GM12878 (cell line): ENCODE measurements at regions of chr10 and their contacts with region 1.

Region 1: GRCh38 chr10:18659120-18659818 is at the start of gene ARL5B:
- DNase-seq: peak; percentile 92
- ATAC-seq: peak; percentile 91
- H3K4me3 ChIP-seq: peak within 1 kb of the TSS; percentile 92
- H3K27ac ChIP-seq: peak within 1 kb of the TSS; percentile 100
- H3K4me1 ChIP-seq: peaks cover 3% of the 10 kb centered on the region; the same call in 1 of the 2 replicates
- H3K27me3 ChIP-seq: no peaks in the 10 kb centered on the region
- CTCF ChIP-seq: no peak
- EP300 ChIP-seq: peak; percentile 89 to 95
- POLR2A ChIP-seq: peak; percentile 90
- RAD21 ChIP-seq: no peak
- polyA plus RNA-seq, gene ARL5B: 2.5 to 2.6 TPM

Region 2: DNA sequence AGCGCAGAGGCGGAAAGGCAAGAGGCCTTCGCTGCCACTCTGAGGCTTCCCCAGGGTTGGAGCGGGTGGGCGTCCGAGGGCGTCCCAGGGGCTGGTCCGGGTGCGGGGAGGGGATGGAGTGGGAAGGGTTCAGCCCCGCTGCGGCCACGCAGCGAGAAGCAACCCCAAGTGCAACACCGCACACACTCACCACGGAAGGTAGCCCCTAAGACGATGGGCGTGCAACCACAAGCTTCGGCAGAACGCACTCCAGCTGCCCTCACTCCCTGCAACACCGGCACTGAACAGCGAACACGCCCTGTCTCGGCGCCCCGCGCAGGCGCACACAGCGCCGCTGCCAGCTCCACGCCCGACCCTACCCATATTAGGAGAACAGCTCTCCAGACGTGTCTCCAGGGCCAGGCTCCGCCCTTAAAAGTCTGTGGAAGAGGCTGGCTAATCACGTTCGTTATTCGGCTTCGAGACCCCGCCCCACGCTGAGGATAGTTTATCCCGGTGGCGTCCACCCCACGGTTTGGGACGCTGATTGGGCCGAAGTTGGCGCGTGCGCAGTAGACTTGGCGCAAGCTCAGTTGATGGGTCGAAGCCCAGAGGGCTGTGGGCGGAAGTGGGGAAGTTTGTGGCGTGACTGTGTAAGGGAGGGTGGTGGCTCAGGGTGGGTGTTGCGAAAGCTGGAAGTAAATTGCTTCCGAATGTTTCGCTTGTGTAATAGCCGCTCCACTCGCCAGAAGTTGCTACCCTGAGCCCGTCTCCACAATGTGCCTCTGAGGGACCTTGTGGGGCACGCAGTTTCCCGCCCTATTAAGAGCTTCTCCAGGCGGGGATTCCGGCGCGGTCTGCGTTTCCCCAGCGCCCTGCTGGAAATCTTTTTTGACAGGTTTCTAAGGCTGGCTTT is 1841.9 kb before region 1 on chr10 and contains the start of gene RSU1:
- CTCF ChIA-PET with region 1: no interaction called
- POLR2A ChIA-PET with region 1: no interaction called
- RAD21 ChIA-PET with region 1: no interaction called
- SMC1A ChIA-PET with region 1: no interaction called
- in situ Hi-C with region 1: loop called (anchors 25 kb)
- intact Hi-C with region 1: no loop called
- DNase-seq: peak; percentile 98
- ATAC-seq: peak; percentile 97
- H3K4me3 ChIP-seq: peak within 1 kb of the TSS; percentile 85
- H3K27ac ChIP-seq: peak within 1 kb of the TSS; percentile 78
- H3K4me1 ChIP-seq: no peaks in the 10 kb centered on the region
- H3K27me3 ChIP-seq: no peaks in the 10 kb centered on the region; a peak in 1 of 4 replicates
- CTCF ChIP-seq: no peak
- EP300 ChIP-seq: no peak
- POLR2A ChIP-seq: peak; percentile 89
- RAD21 ChIP-seq: no peak
- polyA plus RNA-seq, gene RSU1: 80.7 to 139 TPM

Region 3: DNA sequence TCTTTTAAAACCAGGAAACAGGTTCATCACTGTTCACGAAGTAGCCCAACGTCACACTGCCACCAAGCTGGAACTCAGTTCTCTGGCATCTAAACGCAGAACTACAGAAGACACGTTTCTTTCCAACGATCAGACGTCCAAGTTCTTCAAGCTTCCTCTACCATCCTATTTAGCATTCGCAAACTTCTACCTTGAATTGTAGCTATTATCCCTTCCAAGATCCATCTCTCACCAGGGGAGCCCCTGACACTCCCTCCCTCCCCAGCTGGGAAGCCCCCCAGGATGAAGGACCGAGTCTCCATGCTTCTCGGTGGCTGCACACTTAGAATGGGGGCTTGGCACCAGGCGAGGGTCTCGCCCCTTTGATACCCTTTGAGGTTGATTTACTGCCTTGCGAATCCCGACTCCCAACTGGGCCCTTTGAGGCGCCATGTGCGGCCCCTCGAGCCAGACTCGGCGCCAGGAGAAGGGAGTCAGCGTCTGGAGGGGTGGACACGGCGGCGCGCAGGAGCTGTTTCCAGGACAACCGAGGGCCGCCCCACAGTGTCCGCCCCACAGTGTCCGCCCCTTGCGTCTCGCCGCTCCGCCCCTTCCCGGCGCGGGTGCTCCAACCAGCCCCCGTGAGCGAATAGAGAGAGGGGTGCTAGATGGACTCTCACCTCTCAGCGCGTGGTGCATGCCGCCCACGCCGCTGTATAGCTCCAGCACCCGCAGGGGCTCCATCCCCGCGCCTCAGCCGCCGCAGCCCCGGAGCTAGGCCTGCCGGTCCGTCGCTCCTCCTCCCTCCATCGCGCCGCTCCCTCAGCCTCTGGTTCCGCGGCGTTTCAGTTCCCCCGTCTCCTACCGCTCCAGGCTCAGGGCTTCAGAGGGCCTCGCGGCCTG is 1458.1 kb before region 1 on chr10 and contains the start of gene TRDMT1:
- CTCF ChIA-PET with region 1: no interaction called
- POLR2A ChIA-PET with region 1: no interaction called
- RAD21 ChIA-PET with region 1: no interaction called
- SMC1A ChIA-PET with region 1: no interaction called
- in situ Hi-C with region 1: loop called (anchors 25 kb)
- intact Hi-C with region 1: no loop called
- DNase-seq: no peak
- ATAC-seq: peak; percentile 99
- H3K4me3 ChIP-seq: peak within 1 kb of the TSS; percentile 89
- H3K27ac ChIP-seq: peak within 1 kb of the TSS; percentile 58; the same call in 1 of the 2 replicates
- H3K4me1 ChIP-seq: peaks cover under 1% of the 10 kb centered on the region
- H3K27me3 ChIP-seq: no peaks in the 10 kb centered on the region
- CTCF ChIP-seq: no peak
- EP300 ChIP-seq: no peak
- POLR2A ChIP-seq: peak; percentile 87
- RAD21 ChIP-seq: peak; percentile 22; the same call in 1 of the 2 replicates
- polyA plus RNA-seq, gene TRDMT1: 2.3 to 5.2 TPM

Region 4: DNA sequence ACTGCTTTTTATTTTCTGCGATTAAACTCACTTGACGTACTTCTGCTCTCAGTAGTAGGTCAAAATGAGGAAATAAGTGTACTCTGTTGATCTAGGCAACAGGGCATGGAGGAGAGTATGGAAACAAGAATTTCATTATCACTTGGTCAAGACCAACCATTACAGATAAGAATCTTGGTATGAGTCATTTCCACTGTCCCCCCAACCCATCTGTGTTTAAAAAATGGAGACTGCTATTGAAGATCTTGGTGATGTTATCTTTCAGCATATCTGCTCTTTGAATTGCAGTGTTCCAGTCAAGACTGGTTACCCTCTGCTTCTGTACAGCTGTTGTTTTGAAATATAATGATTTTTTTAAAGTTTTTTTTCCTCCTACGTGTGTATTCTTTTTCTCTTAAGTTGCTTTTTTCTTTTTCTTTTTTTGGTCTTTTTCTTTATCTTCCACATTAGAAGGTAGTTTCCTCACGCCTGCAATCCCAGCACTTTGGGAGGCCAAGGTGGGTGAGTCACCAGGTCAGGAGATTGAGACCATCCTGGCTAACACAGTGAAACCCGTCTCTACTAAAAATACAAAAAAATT is 1003.6 kb before region 1 on chr10:
- CTCF ChIA-PET with region 1: no interaction called
- POLR2A ChIA-PET with region 1: no interaction called
- RAD21 ChIA-PET with region 1: no interaction called
- SMC1A ChIA-PET with region 1: no interaction called
- in situ Hi-C with region 1: loop called (anchors 10 kb)
- intact Hi-C with region 1: no loop called
- DNase-seq: peak; percentile 64
- ATAC-seq: peak; percentile 92
- H3K4me3 ChIP-seq: no peak overlapping the region; the same call in 1 of the 2 replicates
- H3K27ac ChIP-seq: peak overlapping the region; percentile 49
- H3K4me1 ChIP-seq: peaks cover 11% of the 10 kb centered on the region; the same call in 1 of the 2 replicates
- H3K27me3 ChIP-seq: no peaks in the 10 kb centered on the region
- CTCF ChIP-seq: no peak
- EP300 ChIP-seq: peak; percentile 59 to 76; a peak in 2 of 4 replicates
- POLR2A ChIP-seq: no peak
- RAD21 ChIP-seq: no peak

Region 5: GRCh38 chr10:17685233-17685840 is 973.9 kb before region 1 on chr10:
- CTCF ChIA-PET with region 1: no interaction called
- POLR2A ChIA-PET with region 1: no interaction called
- RAD21 ChIA-PET with region 1: no interaction called
- SMC1A ChIA-PET with region 1: no interaction called
- in situ Hi-C with region 1: no loop called
- intact Hi-C with region 1: loop called (anchors 10 kb)
- DNase-seq: peak; percentile 28
- ATAC-seq: peak; percentile 89
- H3K4me3 ChIP-seq: no peak overlapping the region
- H3K27ac ChIP-seq: peak overlapping the region; percentile 83
- H3K4me1 ChIP-seq: peaks cover 12% of the 10 kb centered on the region
- H3K27me3 ChIP-seq: no peaks in the 10 kb centered on the region
- CTCF ChIP-seq: no peak
- EP300 ChIP-seq: peak in 1 of 2 experiments; percentile 50; a peak in 1 of 4 replicates
- POLR2A ChIP-seq: no peak
- RAD21 ChIP-seq: no peak

Region 6: DNA sequence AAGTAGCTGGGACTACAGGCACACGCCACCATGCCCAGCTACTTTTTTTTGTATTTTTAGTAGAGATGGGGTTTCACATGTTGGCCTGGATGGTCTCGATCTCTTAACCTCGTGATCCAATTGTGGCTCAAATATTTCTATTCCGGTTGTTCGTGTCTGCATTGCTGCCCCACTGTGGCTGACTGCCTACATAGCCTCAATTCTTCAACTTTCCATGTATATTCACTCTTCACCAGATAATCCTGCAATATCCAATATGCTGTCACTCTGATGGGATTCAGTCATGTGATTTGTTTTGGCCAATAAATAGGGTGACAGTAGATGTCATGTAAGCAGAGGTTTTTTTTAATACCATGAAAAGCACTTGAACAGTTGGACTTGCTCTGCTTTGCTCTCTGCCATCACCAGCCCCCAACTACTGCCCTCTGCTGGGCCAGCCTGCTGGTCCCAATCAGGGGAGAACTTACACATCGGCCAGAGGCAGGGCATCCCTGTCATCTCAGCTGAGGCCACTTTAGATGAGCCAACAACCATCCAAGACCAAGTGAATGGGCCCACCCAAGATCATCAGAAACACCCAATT is 64.6 kb before region 1 on chr10:
- CTCF ChIA-PET with region 1: no interaction called
- POLR2A ChIA-PET with region 1: no interaction called
- RAD21 ChIA-PET with region 1: no interaction called
- SMC1A ChIA-PET with region 1: no interaction called
- in situ Hi-C with region 1: no loop called
- intact Hi-C with region 1: no loop called
- DNase-seq: no peak
- ATAC-seq: peak; percentile 80
- H3K4me3 ChIP-seq: no peak overlapping the region
- H3K27ac ChIP-seq: no peak overlapping the region
- H3K4me1 ChIP-seq: no peaks in the 10 kb centered on the region
- H3K27me3 ChIP-seq: no peaks in the 10 kb centered on the region
- CTCF ChIP-seq: peak; percentile 24 to 47 (median 34); a peak in 4 of 6 replicates
- EP300 ChIP-seq: no peak
- POLR2A ChIP-seq: no peak
- RAD21 ChIP-seq: no peak

Region 7: GRCh38 chr10:19097151-19097550 is 437.9 kb after region 1 on chr10:
- CTCF ChIA-PET with region 1: no interaction called
- POLR2A ChIA-PET with region 1: no interaction called
- RAD21 ChIA-PET with region 1: no interaction called
- SMC1A ChIA-PET with region 1: no interaction called
- in situ Hi-C with region 1: no loop called
- intact Hi-C with region 1: no loop called
- DNase-seq: no peak
- ATAC-seq: no peak
- H3K4me3 ChIP-seq: no peak overlapping the region
- H3K27ac ChIP-seq: no peak overlapping the region
- H3K4me1 ChIP-seq: no peaks in the 10 kb centered on the region
- H3K27me3 ChIP-seq: no peaks in the 10 kb centered on the region
- CTCF ChIP-seq: no peak
- EP300 ChIP-seq: no peak
- POLR2A ChIP-seq: no peak
- RAD21 ChIP-seq: no peak